H1 (cell line): ENCODE measurements at regions of chr5 and their contacts with region 1.

Region 1: GRCh38 chr5:140073296-140073695 is 30.2 kb upstream of the NRG2 start:
- DNase-seq: no peak
- H3K4me3 ChIP-seq: no peak overlapping the region
- H3K27ac ChIP-seq: no peak overlapping the region
- H3K4me1 ChIP-seq: no peaks in the 10 kb centered on the region
- H3K27me3 ChIP-seq: no peaks in the 10 kb centered on the region
- CTCF ChIP-seq: peak in 2 of 3 experiments; percentile 7 to 22; a peak in 2 of 4 replicates
- EP300 ChIP-seq: no peak
- POLR2A ChIP-seq: no peak
- RAD21 ChIP-seq: peak in 1 of 2 experiments; percentile 32; a peak in 3 of 4 replicates

Region 2: DNA sequence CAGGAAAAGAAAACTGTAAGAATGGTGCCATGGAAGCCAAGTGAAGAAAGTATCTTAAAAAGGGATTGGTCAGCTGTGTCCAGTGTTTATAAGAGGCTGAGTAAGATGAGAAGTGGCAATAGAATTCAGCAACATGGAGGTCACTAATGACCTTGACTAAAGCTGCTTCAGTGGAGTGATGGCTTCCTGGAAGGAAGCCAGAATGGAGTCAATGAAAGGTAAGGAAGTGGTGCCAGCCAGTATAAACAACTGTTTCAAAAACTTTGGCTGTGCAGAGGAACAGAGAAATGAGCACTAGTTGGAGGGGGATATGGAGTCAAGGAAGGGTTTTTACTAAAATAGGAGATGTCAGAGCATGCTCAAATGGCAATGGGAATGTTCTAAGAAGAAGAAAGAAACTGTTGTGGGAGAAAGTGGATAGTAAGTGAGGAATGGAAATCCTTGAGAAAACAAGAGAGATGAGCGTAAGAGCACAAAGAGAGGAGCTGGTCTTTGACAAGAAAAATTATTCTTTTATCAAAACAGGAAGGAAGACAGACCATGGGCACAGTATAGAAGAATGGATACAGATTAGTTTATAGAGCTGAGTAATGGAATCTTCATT is 19.1 kb before region 1 on chr5:
- CTCF ChIA-PET with region 1: interaction called, 10 read pairs
- POLR2A ChIA-PET with region 1: no interaction called
- DNase-seq: no peak
- H3K4me3 ChIP-seq: no peak overlapping the region
- H3K27ac ChIP-seq: no peak overlapping the region
- H3K4me1 ChIP-seq: no peaks in the 10 kb centered on the region
- H3K27me3 ChIP-seq: no peaks in the 10 kb centered on the region; a peak in 3 of 7 replicates
- CTCF ChIP-seq: no peak
- EP300 ChIP-seq: no peak
- POLR2A ChIP-seq: no peak
- RAD21 ChIP-seq: no peak

Region 3: DNA sequence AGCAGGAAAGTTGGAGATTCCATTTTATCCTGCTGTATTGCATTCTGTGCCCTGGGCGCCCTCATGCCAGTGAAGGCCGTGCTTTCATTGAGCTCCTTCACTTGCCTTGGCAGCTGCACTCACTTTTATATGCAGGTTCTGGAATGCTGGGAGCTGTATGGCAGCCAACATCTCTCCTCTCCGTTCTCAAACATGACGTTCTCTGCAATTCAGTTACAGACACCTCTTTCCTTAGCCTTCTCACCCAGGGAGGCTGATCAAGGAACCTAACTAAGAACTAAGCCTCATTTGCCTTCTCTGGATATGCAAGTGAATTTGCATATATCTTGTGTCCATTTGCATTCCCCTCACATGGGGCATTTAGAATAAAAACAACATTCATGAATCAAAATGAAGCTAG is 11.2 kb after region 1 on chr5:
- CTCF ChIA-PET with region 1: interaction called, 13 read pairs
- POLR2A ChIA-PET with region 1: no interaction called
- DNase-seq: no peak
- H3K4me3 ChIP-seq: no peak overlapping the region
- H3K27ac ChIP-seq: no peak overlapping the region
- H3K4me1 ChIP-seq: peaks cover 0 to 4% (median 2%) of the 10 kb centered on the region in 4 experiments; a peak in 1 of 7 replicates
- H3K27me3 ChIP-seq: no peaks in the 10 kb centered on the region
- CTCF ChIP-seq: no peak
- EP300 ChIP-seq: no peak
- POLR2A ChIP-seq: no peak
- RAD21 ChIP-seq: no peak

Region 4: DNA sequence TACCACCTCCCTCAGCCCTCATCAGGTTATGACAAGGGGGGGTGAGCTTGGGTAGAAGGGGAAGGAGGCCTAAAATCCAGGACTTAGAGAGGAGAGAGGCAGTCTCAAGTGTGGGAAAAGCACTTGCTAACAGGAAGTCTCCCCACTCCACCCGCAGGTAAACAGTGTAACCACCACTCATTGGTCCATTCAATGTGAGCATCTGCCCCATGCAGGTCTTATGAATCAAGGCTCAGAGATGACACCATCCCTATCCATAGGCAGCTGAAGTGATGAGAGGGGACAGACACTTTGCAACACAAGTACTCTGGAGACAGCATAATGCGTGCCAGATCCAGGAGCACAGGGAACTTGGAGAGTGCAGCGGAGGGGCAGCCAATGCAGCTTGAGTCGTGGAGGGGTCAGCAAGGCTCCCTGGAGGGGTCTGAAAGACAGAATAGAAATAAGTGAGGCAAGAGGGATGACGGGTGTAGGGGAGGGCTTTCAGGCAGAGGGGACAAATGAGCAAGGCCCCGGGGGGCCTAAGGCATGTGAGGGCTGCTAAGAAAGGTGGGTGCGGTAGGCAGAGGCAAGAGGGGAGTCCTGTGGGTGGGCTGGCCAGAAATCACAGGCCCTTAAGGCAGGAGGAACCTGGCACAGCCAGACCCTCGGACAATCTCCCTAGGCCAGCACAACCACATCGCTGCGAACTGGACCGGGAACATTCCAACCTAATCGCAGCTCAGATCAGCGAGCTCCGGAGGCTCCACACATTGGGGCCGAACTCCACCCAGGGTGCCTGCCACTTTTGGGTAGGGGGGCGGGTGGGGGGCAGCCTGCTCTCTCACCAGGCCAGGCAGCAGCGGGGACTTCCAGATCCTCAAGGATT is 78.7 kb after region 1 on chr5:
- CTCF ChIA-PET with region 1: interaction called, 44 read pairs
- POLR2A ChIA-PET with region 1: interaction called, 3 read pairs
- DNase-seq: no peak
- H3K4me3 ChIP-seq: peak overlapping the region in 1 of 4 experiments; percentile 14; a peak in 1 of 8 replicates
- H3K27ac ChIP-seq: no peak overlapping the region
- H3K4me1 ChIP-seq: peaks cover 6 to 24% (median 18%) of the 10 kb centered on the region in 4 experiments
- H3K27me3 ChIP-seq: peaks cover 10 to 33% (median 25%) of the 10 kb centered on the region in 4 experiments
- CTCF ChIP-seq: no peak
- EP300 ChIP-seq: no peak
- POLR2A ChIP-seq: no peak
- RAD21 ChIP-seq: no peak

Region 5: GRCh38 chr5:140157032-140157803 is 83.9 kb after region 1 on chr5:
- CTCF ChIA-PET with region 1: interaction called, 44 read pairs
- POLR2A ChIA-PET with region 1: interaction called, 3 read pairs
- DNase-seq: peak in 1 of 2 experiments; percentile 96
- H3K4me3 ChIP-seq: peak overlapping the region in 3 of 4 experiments; percentile 19 to 52 (median 26); a peak in 6 of 8 replicates
- H3K27ac ChIP-seq: no peak overlapping the region
- H3K4me1 ChIP-seq: peaks cover 6 to 19% (median 14%) of the 10 kb centered on the region in 4 experiments
- H3K27me3 ChIP-seq: peaks cover 0 to 8% (median 6%) of the 10 kb centered on the region in 4 experiments; a peak in 4 of 7 replicates
- CTCF ChIP-seq: peak; percentile 89 to 96 (median 89)
- EP300 ChIP-seq: no peak; a peak in 1 of 3 replicates
- POLR2A ChIP-seq: no peak
- RAD21 ChIP-seq: peak; percentile 96 to 98